ENCODE measurements at regions of chr9 and their contacts with region 1.

Region 1: DNA sequence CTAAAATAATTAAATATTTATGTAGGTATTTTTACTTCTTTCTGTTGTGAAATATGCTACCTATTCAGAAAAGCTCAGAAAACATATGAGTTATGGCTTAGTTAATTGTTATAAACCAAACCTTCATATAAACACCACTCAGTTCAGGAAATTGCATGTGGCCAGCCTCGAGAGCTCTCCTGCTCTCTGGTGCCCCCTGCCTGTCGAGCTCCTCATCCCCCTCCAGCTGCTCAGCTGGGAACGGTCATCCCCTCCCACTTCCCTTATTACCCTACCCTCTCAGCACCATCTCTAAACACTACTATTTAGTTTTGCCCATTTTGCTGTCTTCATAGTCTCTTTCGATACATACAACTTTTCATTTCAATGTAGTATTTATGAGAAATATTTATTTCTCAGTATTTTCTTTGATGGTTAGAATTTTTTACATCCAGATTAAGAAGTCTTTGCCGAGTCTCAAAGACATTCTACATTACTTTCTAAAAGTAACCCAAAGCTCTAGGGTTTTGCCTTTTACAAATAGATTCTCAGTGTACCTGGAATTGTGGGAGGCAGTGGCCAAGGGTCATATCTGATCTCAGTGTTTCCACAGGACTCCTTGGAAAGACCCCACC is 51.2 kb upstream of the SEMA4D start:
- DNase-seq: peak; percentile 76 to 89
- ATAC-seq: peak; percentile 95 to 99 (median 96)
- H3K4me3 ChIP-seq: no peak overlapping the region
- H3K27ac ChIP-seq: no peak overlapping the region
- H3K4me1 ChIP-seq: no peaks in the 10 kb centered on the region
- H3K27me3 ChIP-seq: no peaks in the 10 kb centered on the region
- CTCF ChIP-seq: peak; percentile 98

Region 2: GRCh38 chr9:89318123-89319014 is 230.8 kb before region 1 on chr9 and contains the start of gene SECISBP2:
- intact Hi-C with region 1: loop called (anchors 2 to 10 kb)
- DNase-seq: peak; percentile 97 to 98
- ATAC-seq: peak; percentile 95 to 98 (median 96)
- H3K4me3 ChIP-seq: peak within 1 kb of the TSS; percentile 93
- H3K27ac ChIP-seq: peak within 1 kb of the TSS; percentile 100
- H3K4me1 ChIP-seq: peaks cover 43% of the 10 kb centered on the region
- H3K27me3 ChIP-seq: no peaks in the 10 kb centered on the region
- CTCF ChIP-seq: peak; percentile 74
- total RNA-seq, gene SECISBP2: 26.2 to 49.0 (median 38.6) TPM

Region 3: GRCh38 chr9:89388084-89388867 is 160.9 kb before region 1 on chr9:
- intact Hi-C with region 1: loop called in 1 of 2 experiments (anchors 10 kb)
- DNase-seq: peak; percentile 76 to 87
- ATAC-seq: peak; percentile 69 to 84 (median 82)
- H3K4me3 ChIP-seq: no peak overlapping the region
- H3K27ac ChIP-seq: peak overlapping the region; percentile 85
- H3K4me1 ChIP-seq: peaks cover 18% of the 10 kb centered on the region
- H3K27me3 ChIP-seq: no peaks in the 10 kb centered on the region
- CTCF ChIP-seq: no peak

Region 4: GRCh38 chr9:89483592-89484522 is 65.3 kb before region 1 on chr9:
- intact Hi-C with region 1: loop called in 1 of 2 experiments (anchors 10 kb)
- DNase-seq: no peak
- ATAC-seq: peak; percentile 19 to 36 (median 34)
- H3K4me3 ChIP-seq: peak overlapping the region; percentile 43
- H3K27ac ChIP-seq: peak overlapping the region; percentile 94
- H3K4me1 ChIP-seq: peaks cover 63% of the 10 kb centered on the region
- H3K27me3 ChIP-seq: no peaks in the 10 kb centered on the region
- CTCF ChIP-seq: no peak

Region 5: GRCh38 chr9:89522261-89522958 is 26.7 kb before region 1 on chr9:
- intact Hi-C with region 1: no loop called
- DNase-seq: no peak
- ATAC-seq: no peak
- H3K4me3 ChIP-seq: no peak overlapping the region
- H3K27ac ChIP-seq: no peak overlapping the region
- H3K4me1 ChIP-seq: peaks cover 13% of the 10 kb centered on the region
- H3K27me3 ChIP-seq: no peaks in the 10 kb centered on the region
- CTCF ChIP-seq: no peak

Measured in psoas muscle (tissue), 8 donors.